ENCODE measurements at regions of chr10 and their contacts with region 1.

Region 1: GRCh38 chr10:31864834-31865518 is 63.7 kb downstream of the ARHGAP12 start:
- DNase-seq: no peak

Region 2: GRCh38 chr10:31759799-31760626 is 105.0 kb before region 1 on chr10:
- intact Hi-C with region 1: no loop called
- DNase-seq: peak; percentile 98

Region 3: DNA sequence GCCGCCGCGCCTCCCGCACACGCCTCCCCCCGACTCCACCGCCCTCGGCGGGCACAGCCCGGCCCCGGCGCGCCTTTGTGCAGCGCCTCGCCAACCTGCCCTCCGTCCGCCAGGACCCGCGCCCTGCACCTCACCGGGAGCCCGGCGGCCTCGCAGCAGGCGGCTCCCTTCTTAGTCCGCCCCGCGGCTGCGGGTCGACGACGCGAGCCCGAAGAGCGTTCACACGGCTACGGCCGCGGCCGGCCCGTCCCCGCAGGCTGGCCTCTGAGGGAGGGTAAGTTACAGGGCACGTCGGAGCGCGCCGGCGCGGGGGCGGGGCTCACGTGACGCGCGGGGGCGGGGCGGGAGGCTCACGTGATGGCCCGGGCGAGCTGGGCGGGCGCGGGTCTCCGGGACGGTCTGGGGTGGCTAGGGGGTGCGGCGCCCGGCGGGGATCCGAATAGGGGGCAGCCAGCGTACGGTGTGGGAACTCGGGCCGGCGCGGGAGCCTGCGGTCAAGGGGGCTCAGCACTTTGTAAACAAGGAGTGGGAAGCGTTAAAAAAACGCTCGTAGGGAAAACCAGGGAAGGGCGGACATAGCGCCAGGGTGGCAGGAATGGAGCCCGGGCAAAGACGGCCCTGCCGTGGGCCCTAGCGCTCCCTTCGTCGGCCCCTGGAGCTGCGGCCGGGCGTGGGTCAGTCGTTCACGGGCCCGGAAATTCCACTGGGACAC is 63.7 kb after region 1 on chr10 and contains the start of gene ARHGAP12:
- intact Hi-C with region 1: loop called (anchors 5 kb)
- DNase-seq: peak; percentile 96
- total RNA-seq, gene ARHGAP12: 21.7 TPM

Region 4: DNA sequence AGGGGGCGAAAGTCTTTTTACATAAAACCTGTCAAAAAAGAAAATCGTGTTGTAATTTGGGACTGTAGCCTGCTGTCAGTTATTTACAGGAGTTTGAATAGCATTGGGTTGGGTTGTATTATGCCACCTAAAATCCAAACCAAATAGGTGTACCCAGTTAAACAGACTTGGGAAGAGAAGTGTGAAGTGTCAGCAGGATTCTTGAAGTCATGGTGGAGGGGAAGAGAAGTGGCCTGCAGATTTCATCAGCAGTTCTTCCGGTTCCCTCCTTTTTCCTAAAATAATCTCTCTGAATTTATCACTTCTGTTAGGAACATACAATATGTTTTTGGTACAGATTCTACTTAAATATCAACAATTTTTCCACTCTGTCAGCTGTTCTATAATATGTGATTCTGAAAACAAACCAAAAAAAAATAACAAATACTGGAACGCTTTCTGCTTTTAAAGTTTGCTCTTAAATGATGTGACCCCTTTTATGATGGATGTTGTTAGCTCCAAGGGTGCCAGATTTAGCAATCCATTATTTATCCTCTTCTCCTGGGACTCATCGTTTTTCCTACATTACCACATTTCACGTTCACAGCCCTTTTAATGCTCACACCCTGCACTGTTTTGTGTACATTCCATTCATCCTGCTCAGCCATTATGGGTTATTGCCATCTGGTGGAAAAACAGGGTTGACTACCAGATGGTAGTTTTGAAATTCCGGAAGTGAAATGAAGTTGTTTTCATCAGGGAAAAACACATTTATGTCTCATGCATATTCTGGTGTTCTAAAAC is 82.4 kb after region 1 on chr10:
- intact Hi-C with region 1: loop called (anchors 2 kb)
- DNase-seq: no peak

Region 5: GRCh38 chr10:32004161-32004591 is 139.2 kb after region 1 on chr10:
- intact Hi-C with region 1: loop called (anchors 5 kb)
- DNase-seq: no peak

Region 6: GRCh38 chr10:32207544-32207943 is 342.6 kb after region 1 on chr10:
- intact Hi-C with region 1: loop called (anchors 10 kb)
- DNase-seq: no peak

Measured in cardiac septum (tissue), 1 donor.